ENCODE measurements at regions of chr5 and their contacts with region 1.

Region 1: GRCh38 chr5:88396751-88397281 is 128.2 kb upstream of the TMEM161B start:
- DNase-seq: no peak
- H3K4me3 ChIP-seq: no peak overlapping the region
- H3K27ac ChIP-seq: no peak overlapping the region
- H3K4me1 ChIP-seq: no peaks in the 10 kb centered on the region
- H3K27me3 ChIP-seq: no peaks in the 10 kb centered on the region
- CTCF ChIP-seq: no peak
- POLR2A ChIP-seq: no peak

Region 2: DNA sequence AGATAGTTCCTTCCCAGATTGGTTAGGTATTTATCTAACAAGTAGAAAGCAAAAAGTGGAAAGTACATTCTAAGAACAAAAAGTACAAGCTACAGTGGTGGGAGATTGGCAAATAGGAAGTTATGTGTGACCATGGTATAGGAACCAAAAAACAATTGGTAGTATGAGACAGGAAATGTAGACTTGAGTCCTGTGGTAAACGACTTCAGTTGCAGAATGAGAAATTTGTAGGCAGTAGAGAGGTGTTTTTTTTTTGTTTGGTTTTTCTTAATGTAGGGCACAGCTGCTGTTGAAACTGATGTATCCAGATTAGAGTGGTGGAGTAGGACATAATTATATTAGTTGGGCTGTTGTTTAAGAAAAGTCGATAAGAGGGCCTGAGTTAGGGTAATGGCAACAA is 1056.1 kb before region 1 on chr5:
- intact Hi-C with region 1: no loop called
- DNase-seq: no peak
- H3K4me3 ChIP-seq: no peak overlapping the region
- H3K27ac ChIP-seq: no peak overlapping the region
- H3K4me1 ChIP-seq: no peaks in the 10 kb centered on the region
- H3K27me3 ChIP-seq: no peaks in the 10 kb centered on the region
- CTCF ChIP-seq: no peak
- POLR2A ChIP-seq: no peak

Region 3: GRCh38 chr5:88436290-88436689 is 39.5 kb after region 1 on chr5:
- intact Hi-C with region 1: loop called (anchors 2 kb)
- DNase-seq: no peak
- H3K4me3 ChIP-seq: no peak overlapping the region
- H3K27ac ChIP-seq: no peak overlapping the region
- H3K4me1 ChIP-seq: no peaks in the 10 kb centered on the region
- H3K27me3 ChIP-seq: no peaks in the 10 kb centered on the region
- CTCF ChIP-seq: no peak
- POLR2A ChIP-seq: no peak

Measured in breast epithelium (tissue), 4 donors.